GM10248 (cell line): ENCODE measurements at regions of chr11 and their contacts with region 1.

Region 1: GRCh38 chr11:14300661-14301304 is 58.2 kb downstream of the RRAS2 start:
- DNase-seq: peak; percentile 41
- CTCF ChIP-seq: peak; percentile 70

Region 2: DNA sequence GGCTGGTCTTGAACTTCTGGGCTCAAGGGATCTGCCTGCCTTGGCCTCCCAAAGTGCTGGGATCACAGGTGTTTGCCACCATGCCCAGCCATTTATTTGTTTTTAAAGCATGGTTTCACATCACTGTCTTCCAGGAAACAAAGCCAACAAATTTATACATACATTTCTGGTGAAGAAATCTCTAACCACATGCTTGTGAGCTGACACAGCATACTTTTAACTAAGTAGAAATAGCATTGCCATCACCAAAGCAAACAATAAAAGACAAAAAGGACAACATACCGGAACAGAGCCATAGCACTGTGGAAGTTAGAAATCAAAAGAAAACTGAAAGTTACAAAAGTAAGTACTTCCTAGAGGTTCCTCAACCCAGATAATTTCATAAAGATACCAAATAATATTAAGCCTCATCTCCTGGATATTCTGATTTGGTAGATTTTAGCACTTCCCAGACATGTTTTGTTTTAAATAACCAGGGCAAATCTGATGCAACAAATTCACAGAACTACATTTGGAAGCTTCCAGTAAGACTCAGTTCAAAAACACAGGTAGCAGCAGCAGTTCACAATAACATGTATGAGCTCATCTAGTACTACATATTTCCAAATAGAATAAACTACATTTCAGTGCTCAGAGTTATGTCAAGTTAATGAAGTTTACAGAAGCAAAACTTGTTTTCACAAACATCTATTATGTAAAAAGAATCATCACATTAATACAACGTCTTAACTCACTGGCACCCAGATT is 12.4 kb before region 1 on chr11:
- CTCF ChIA-PET with region 1: interaction called, 17 read pairs
- POLR2A ChIA-PET with region 1: no interaction called
- DNase-seq: no peak
- CTCF ChIP-seq: no peak

Region 3: GRCh38 chr11:14373931-14374646 is 73.3 kb after region 1 on chr11:
- CTCF ChIA-PET with region 1: interaction called, 10 read pairs
- POLR2A ChIA-PET with region 1: no interaction called
- DNase-seq: no peak
- CTCF ChIP-seq: no peak

Region 4: GRCh38 chr11:14449302-14449714 is 148.5 kb after region 1 on chr11:
- CTCF ChIA-PET with region 1: interaction called, 109 read pairs
- POLR2A ChIA-PET with region 1: no interaction called
- DNase-seq: no peak
- CTCF ChIP-seq: no peak

Region 5: DNA sequence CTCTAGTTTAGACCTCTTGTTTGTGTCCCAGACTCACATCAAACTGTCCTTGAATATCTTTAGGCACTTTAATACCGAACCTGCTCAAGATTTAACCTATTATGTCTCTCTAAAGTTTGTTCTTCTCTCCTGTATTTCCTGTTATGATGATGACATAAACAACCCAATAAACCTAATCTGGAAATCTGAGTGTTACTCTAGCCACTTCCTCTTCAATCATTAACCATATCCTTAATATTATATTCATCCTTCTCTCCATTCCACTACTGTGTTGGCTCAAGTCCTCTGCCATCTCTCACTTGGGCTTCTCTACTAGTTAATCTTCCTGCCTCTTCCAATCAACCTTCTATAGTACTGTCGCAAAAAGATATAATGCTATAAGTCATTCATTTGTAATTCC is 162.8 kb after region 1 on chr11:
- CTCF ChIA-PET with region 1: interaction called, 10 read pairs
- POLR2A ChIA-PET with region 1: no interaction called
- DNase-seq: no peak
- CTCF ChIP-seq: no peak